Activated naive CD4-positive, alpha-beta T cell treated with anti-CD3 and anti-CD28 coated beads for 36 hours (primary cell): ENCODE measurements at regions of chr6 and their contacts with region 1.

Region 1: GRCh38 chr6:13814176-13814937 is at the start of gene MCUR1:
- DNase-seq: peak; percentile 85
- H3K4me3 Mint-ChIP-seq: peak within 1 kb of the TSS; percentile 83
- H3K27ac Mint-ChIP-seq: peak within 1 kb of the TSS; percentile 82
- H3K4me1 Mint-ChIP-seq: peaks cover 28% of the 10 kb centered on the region
- H3K27me3 Mint-ChIP-seq: no peaks in the 10 kb centered on the region
- total RNA-seq, gene MCUR1: 27.1 to 28.3 TPM

Region 2: GRCh38 chr6:13487122-13488014 is 327.0 kb before region 1 on chr6 and contains the start of gene GFOD1:
- CTCF ChIA-PET with region 1: no interaction called
- intact Hi-C with region 1: loop called (anchors 1 kb)
- DNase-seq: peak; percentile 80
- H3K4me3 Mint-ChIP-seq: peak within 1 kb of the TSS; percentile 92
- H3K27ac Mint-ChIP-seq: peak within 1 kb of the TSS; percentile 47
- H3K4me1 Mint-ChIP-seq: peaks cover 24% of the 10 kb centered on the region
- H3K27me3 Mint-ChIP-seq: peaks cover 2% of the 10 kb centered on the region
- total RNA-seq, gene GFOD1: 3.7 to 4.2 TPM

Region 3: DNA sequence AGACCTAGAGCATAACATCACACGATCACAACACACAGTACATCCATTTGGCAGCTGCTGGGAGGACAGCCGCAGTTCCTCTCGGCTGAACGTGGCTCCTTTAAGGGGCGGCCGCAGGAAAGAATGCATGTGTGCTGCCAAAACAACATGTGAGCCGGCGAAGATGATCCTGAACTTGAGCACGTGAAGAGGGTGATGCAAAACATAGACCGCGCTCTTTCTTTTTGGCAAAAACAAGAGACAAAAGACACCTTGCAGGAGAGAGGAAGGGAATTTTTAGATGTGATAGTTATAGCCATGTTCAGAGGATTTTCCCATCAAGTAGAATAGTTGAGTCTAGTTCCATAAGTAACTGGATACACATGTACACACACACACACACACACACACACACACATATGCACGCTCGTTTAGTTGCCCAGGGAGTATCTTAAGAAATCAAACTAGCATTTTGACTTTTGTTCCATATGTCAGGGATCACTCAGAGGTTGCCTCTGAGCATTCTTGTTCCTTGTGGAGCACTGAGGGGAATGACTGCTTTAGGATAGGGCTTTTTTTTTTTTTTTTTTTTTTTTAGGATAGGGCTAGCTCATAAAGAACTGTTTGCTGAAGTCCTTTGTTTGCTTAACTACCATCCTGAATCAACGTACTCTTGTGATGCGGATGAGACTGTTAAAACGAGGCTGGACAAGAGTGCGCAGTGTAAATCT is 81.0 kb before region 1 on chr6:
- CTCF ChIA-PET with region 1: no interaction called
- intact Hi-C with region 1: no loop called
- DNase-seq: no peak
- H3K4me3 Mint-ChIP-seq: no peak overlapping the region
- H3K27ac Mint-ChIP-seq: no peak overlapping the region
- H3K4me1 Mint-ChIP-seq: peaks cover 9% of the 10 kb centered on the region
- H3K27me3 Mint-ChIP-seq: peaks cover 5% of the 10 kb centered on the region

Region 4: GRCh38 chr6:13767121-13767808 is 47.1 kb before region 1 on chr6:
- CTCF ChIA-PET with region 1: interaction called, 3 read pairs
- intact Hi-C with region 1: loop called (anchors 2 kb)
- DNase-seq: peak; percentile 71
- H3K4me3 Mint-ChIP-seq: peak overlapping the region; percentile 78
- H3K27ac Mint-ChIP-seq: no peak overlapping the region
- H3K4me1 Mint-ChIP-seq: peaks cover 43% of the 10 kb centered on the region
- H3K27me3 Mint-ChIP-seq: peaks cover 1% of the 10 kb centered on the region

Region 5: DNA sequence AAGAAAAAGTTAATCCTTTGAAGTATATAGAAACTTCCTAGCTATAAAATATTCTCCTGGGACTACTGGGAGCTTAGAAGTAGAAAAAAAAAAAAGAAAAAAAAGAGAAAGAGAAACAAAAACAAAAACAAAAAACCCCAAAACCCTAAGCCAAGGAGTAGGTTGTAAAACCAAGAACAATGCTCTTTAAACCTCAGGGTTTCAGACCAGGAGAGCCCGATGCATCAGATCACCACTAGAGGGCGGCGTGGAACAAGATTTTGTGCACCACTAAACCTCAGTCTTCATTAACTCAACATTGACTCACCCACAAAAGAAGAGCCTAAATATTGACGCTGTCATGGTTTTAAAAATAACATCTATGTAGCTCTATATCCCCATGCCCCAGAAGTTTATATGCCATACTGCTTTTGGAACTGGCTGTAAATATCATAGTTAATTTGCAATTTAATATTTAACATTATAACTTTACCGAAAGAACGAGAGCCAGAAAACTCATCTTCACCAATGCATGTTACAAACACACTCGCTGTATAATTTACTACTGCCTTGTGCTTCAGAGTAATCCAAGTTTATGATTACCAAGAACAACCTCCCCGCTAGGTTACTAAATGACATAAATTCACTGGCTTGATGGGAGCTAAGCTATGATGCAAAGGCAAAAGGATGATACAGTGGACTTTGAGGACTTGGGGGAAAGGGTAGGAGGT is 19.2 kb before region 1 on chr6:
- CTCF ChIA-PET with region 1: interaction called, 6 read pairs
- intact Hi-C with region 1: loop called (anchors 2 kb)
- DNase-seq: peak; percentile 97
- H3K4me3 Mint-ChIP-seq: no peak overlapping the region
- H3K27ac Mint-ChIP-seq: no peak overlapping the region
- H3K4me1 Mint-ChIP-seq: peaks cover 14% of the 10 kb centered on the region
- H3K27me3 Mint-ChIP-seq: no peaks in the 10 kb centered on the region

Region 6: DNA sequence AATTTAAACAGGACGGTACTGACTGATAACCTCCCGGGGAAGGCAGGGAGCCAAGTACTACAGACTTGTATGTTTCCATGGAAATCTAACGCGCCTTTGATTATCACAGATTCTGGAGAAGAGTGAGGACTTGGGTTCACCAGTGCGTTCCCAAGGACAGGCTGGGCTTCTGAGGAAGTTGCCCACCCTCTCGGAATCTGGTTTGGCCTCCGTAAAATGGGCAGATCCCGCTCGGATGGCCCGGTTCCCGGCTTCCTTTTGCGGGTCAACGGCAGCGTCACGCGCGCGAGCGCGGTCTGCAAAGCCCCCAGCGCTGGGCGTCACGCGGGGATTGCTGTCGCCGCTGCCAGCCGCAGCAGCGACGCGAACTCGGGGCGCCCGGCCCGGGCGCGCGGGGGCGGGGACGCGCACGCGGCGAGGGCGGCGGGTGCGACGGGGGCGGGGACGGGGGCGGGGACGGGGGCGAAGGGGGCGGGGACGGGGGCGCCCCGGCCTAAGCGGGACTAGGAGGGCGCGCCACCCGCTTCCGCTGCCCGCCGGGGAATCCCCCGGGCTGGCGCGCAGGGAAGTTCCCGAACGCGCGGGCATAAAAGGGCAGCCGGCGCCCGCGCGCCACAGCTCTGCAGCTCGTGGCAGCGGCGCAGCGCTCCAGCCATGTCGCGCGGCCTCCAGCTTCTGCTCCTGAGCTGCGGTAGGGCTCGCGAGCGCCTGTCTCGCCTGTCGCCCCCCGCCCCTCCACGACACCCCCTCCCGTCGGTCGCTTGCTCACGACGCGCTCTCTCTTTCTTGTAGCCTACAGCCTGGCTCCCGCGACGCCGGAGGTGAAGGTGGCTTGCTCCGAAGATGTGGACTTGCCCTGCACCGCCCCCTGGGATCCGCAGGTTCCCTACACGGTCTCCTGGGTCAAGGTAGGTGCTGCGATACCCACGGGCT is 303.1 kb after region 1 on chr6 and contains the start of gene CD83:
- CTCF ChIA-PET with region 1: no interaction called
- intact Hi-C with region 1: loop called (anchors 2 kb)
- DNase-seq: peak; percentile 75
- H3K4me3 Mint-ChIP-seq: peak within 1 kb of the TSS; percentile 93
- H3K27ac Mint-ChIP-seq: peak within 1 kb of the TSS; percentile 87
- H3K4me1 Mint-ChIP-seq: peaks cover 36% of the 10 kb centered on the region
- H3K27me3 Mint-ChIP-seq: peaks cover 2% of the 10 kb centered on the region
- total RNA-seq, gene CD83: 11.9 to 13.8 TPM